ENCODE measurements at regions of chr7 and their contacts with region 1.

Region 1: GRCh38 chr7:5665094-5666025 is 116.1 kb downstream of the RNF216 start:
- DNase-seq: no peak
- H3K4me3 ChIP-seq: no peak overlapping the region
- CTCF ChIP-seq: peak; percentile 70

Region 2: GRCh38 chr7:5441840-5442503 is 223.4 kb before region 1 on chr7:
- CTCF ChIA-PET with region 1: no interaction called
- POLR2A ChIA-PET with region 1: no interaction called
- DNase-seq: no peak
- H3K4me3 ChIP-seq: no peak overlapping the region
- CTCF ChIP-seq: no peak

Region 3: DNA sequence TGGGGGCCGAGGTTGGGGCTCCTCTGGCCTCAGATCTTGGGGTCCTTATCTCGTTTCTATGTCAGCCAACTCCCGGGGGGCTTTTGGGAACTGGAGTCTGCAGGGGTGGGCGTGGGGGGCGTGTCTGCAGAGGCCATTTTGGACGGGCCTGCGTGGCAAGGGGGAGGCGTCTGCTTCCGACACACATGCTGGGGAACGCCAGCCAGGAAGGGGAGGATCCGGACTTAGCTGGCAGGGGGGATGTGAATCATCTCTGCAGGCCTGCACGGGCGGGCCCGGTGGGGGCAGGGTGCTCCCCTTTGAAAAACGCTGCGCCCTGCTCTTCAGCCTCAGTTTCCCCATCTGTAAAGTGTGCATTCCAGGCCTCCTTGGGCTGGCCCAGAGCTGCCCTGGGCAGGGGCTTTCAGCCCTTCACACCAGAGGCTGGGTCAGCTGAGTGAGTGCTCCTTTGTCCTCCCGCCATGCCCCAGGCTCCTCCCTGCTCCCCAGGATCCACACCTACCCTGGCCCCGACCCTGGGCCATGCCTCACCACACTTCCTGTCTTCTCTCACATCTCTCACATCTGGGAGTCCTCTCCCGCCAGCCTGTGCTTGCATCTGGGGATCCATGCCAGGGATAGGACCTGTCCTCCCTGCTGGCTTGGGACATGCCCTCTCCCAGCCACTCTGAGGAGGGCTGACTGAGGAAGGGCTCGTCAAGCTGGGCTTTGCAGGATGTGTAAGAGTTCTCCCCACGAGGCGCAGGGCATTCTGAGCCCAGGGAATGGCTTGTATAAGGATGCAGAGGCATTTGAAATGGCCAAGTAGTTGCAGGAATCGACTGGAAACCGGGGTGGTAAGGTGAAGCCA is 69.1 kb before region 1 on chr7:
- CTCF ChIA-PET with region 1: interaction called, 5 read pairs
- POLR2A ChIA-PET with region 1: interaction called, 10 read pairs
- DNase-seq: peak; percentile 60
- H3K4me3 ChIP-seq: peak overlapping the region; percentile 87
- CTCF ChIP-seq: no peak

Region 4: GRCh38 chr7:5636914-5637313 is 28.4 kb before region 1 on chr7:
- CTCF ChIA-PET with region 1: interaction called, 17 read pairs
- POLR2A ChIA-PET with region 1: no interaction called
- DNase-seq: peak; percentile 59
- H3K4me3 ChIP-seq: no peak overlapping the region
- CTCF ChIP-seq: no peak

Region 5: DNA sequence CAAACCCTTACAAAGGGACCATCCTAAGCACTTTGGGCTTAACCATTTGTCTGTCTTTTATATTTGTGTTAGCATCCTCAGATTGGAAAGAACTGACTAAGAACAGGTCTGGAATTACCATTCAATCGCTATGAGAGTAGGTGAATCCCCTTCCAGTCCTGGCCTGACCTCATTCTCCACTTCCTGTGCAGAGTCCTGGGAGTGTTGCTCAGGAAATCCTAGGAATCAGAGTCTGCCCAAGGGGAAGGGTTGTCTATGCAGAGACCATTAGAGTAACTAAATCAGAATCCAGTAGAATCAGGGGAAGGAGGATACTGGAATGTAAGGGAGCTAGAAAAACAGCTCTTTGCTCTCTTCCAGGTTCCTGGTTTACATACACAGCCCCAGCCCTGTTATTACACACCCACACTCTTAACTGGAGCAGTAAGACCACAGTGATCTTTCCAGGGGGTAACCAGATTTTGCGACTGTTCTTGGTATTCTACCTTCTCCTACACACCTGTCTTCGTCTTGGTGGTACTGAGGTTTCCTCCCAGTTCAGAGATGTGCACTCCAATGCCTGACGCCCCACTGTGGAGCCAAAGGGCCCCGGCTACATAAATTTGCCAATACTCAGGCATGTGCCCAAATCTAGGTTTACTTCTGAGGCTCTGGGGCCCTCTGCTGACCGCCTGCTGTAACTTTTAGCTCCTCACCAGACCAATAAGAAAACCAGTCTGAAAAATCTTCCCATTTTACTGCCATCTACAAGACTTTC is 12.4 kb after region 1 on chr7:
- CTCF ChIA-PET with region 1: interaction called, 54 read pairs
- POLR2A ChIA-PET with region 1: no interaction called
- DNase-seq: no peak
- H3K4me3 ChIP-seq: no peak overlapping the region
- CTCF ChIP-seq: peak; percentile 71

Region 6: GRCh38 chr7:5704534-5704922 is 39.2 kb after region 1 on chr7:
- CTCF ChIA-PET with region 1: interaction called, 171 read pairs
- POLR2A ChIA-PET with region 1: no interaction called
- DNase-seq: no peak
- H3K4me3 ChIP-seq: no peak overlapping the region
- CTCF ChIP-seq: peak; percentile 78